ENCODE measurements at regions of chr7 and their contacts with region 1.

Region 1: DNA sequence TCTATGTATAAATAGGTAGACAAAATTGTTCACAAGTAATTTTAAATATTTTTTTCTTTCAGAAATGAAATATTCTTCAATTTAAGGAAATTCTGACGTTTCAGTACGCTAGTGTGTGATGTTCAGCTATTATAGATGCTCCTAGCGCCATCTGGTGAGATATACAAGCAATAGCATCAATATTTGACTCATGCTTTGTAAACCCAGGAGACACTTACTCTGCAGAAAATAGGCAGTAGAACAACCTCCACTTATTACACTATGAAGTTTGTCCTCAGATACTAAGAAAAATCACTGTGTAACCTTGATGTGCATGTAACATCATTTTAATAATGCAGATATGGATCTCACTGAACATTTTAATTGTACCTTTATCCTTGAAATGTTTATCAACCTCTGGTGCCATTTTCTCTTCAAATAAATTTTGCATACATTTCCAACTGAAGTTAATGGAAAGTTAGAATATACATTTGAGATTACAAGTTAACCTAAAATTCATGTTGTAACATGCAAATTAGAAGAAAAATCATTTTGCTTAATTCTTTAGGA is 151.5 kb upstream of the FAM3C start:
- DNase-seq: no peak
- ATAC-seq: peak; percentile 90
- H3K4me3 Mint-ChIP-seq: no peak overlapping the region
- H3K27ac Mint-ChIP-seq: no peak overlapping the region
- H3K4me1 Mint-ChIP-seq: peaks cover 10% of the 10 kb centered on the region
- H3K27me3 Mint-ChIP-seq: no peaks in the 10 kb centered on the region
- CTCF ChIP-seq: peak; percentile 54

Region 2: DNA sequence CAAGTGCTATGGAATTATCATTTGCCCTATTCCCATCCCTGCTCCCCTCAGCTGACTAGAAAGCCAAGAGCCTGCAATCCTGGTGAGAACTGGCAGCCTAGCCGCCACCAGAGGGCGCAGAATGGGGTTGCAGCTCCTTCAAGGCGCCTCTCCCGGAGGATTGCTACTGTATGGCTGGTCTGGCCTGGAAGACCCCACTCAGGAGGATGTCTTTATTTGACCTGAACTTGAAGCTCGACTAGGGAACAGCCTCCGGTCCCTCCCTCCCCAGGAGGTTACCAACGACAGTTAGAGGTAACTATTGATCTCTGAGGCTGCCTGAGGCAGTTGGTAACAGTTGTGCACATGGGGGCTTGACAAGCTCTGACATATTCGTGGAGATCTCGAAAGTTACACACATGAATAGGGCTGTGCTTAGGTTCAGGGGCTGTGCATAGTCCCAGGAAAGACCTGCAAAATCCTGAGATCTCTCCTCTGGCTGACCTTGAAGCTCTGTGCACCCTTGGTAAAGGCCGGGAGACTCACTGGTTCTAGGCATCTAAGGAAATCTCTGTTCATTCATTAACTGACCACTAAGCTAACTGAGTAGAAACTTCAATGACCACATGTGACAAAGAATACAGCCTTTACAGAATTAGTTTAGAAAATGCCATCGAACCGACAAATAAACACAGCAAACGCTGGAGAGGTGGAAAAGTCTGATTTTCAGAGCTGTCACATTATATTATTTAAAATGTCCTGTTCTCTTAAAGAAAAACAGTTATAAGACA is 755.3 kb before region 1 on chr7:
- CTCF ChIA-PET with region 1: no interaction called
- POLR2A ChIA-PET with region 1: no interaction called
- intact Hi-C with region 1: loop called (anchors 5 kb)
- DNase-seq: peak; percentile 50
- ATAC-seq: peak; percentile 73
- H3K4me3 Mint-ChIP-seq: no peak overlapping the region
- H3K27ac Mint-ChIP-seq: no peak overlapping the region
- H3K4me1 Mint-ChIP-seq: no peaks in the 10 kb centered on the region
- H3K27me3 Mint-ChIP-seq: peaks cover 2% of the 10 kb centered on the region
- CTCF ChIP-seq: peak; percentile 74

Region 3: DNA sequence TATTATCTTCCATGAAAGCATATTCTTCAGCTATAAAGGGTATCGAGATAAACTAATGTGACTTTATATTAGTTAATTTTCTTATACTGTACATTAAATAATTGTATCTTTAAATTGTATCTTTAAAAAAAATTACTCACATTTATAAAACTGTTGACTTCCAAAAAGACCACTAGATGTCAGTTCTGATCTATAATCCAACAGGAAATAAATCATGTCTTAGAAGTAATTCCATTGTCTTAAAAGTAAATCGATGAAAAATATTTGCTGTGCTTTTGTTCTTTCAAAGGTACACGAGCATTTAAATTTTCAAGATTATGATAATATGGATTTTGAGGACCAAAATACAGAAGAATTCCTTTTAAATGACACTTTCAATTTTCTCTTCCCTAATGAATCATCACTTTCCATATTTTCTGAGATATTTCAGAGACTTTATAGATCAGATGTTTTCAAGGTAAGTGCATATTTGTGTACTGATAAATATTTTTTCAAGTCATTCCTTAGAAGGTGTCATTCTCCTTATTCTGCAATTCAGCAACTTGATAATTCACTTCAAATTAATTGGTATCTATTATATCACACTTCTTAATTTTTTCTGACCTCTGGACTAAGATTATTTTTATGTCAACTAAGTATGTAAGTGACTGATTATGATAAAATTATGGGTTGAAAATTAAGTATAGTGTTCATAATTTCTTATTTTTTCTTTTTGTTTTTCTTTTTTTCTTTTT is 420.6 kb before region 1 on chr7:
- CTCF ChIA-PET with region 1: interaction called, 6 read pairs
- POLR2A ChIA-PET with region 1: no interaction called
- intact Hi-C with region 1: loop called (anchors 1 kb)
- DNase-seq: no peak
- ATAC-seq: no peak
- H3K4me3 Mint-ChIP-seq: no peak overlapping the region
- H3K27ac Mint-ChIP-seq: no peak overlapping the region
- H3K4me1 Mint-ChIP-seq: peaks cover 18% of the 10 kb centered on the region
- H3K27me3 Mint-ChIP-seq: no peaks in the 10 kb centered on the region
- CTCF ChIP-seq: no peak

Region 4: GRCh38 chr7:121360564-121360963 is 187.1 kb before region 1 on chr7:
- CTCF ChIA-PET with region 1: interaction called, 27 read pairs
- POLR2A ChIA-PET with region 1: no interaction called
- intact Hi-C with region 1: no loop called
- DNase-seq: no peak
- ATAC-seq: no peak
- H3K4me3 Mint-ChIP-seq: no peak overlapping the region
- H3K27ac Mint-ChIP-seq: no peak overlapping the region
- H3K4me1 Mint-ChIP-seq: no peaks in the 10 kb centered on the region
- H3K27me3 Mint-ChIP-seq: no peaks in the 10 kb centered on the region
- CTCF ChIP-seq: no peak

Region 5: DNA sequence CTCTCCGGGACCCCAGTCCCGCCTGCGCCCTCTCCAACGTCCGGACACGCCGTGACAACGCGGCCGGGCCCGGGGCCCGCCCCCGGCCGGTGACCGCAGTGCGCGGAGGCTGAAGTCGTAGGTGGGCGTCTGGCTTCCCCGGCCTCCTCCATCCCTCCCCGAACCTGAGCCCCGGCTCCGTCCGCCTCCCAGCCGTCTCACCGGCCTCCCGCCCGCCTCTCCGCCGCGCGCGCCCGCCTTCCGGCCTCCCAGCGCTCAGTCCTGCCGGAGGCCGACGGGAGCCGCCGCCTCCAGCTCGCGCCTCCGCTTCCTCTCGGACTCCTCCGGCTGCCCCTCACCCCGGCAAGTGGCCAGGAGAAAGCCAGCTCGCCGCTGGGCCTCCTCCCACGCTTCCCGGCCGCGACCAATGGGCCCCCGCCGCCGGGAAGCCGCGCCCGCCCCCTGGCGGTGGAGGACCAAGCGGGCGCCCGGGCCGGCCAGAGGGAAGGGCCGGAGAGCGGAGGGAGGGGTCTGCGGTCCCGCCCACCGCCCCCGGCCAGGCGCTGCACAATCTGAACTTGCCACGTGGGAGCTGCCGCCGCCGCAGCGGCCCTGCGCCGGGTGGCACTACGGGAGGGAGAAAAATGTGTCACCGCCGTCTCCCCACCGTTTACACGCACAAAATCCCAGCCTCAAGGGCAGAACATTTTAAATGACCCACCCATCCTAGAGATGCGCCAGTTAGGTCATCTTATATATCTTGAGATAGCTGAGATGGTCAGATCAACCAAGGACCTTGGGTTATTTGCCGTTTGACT is 151.5 kb before region 1 on chr7 and contains the start of gene FAM3C:
- CTCF ChIA-PET with region 1: interaction called, 9 read pairs
- POLR2A ChIA-PET with region 1: interaction called, 3 read pairs
- intact Hi-C with region 1: loop called (anchors 1 kb)
- DNase-seq: peak; percentile 96
- ATAC-seq: peak; percentile 88
- H3K4me3 Mint-ChIP-seq: peak within 1 kb of the TSS; percentile 91
- H3K27ac Mint-ChIP-seq: peak within 1 kb of the TSS; percentile 90
- H3K4me1 Mint-ChIP-seq: peaks cover 42% of the 10 kb centered on the region
- H3K27me3 Mint-ChIP-seq: no peaks in the 10 kb centered on the region
- CTCF ChIP-seq: no peak
- total RNA-seq, gene FAM3C: 54.8 and 59.3 TPM in 2 replicates

Region 6: DNA sequence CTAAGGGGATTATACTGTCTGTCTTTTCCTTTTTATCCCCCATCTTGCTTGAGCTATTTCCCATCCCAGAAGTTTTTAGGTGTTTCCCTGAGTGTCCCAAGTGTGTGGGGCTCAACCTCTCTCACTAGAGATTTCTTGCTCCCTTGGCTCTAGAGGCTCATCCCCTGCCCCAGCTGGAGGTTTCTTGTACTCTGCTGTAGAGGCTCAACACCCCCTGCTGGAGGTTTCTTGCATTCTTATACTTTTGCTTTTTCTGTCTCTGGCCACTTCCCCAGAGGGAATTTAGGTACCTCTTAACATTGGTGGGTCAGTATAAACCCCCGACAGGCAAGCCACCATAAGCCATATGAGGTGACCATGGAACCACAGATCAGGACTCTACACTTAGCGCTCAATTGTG is 37.3 kb before region 1 on chr7:
- CTCF ChIA-PET with region 1: no interaction called
- POLR2A ChIA-PET with region 1: no interaction called
- intact Hi-C with region 1: loop called (anchors 1 kb)
- DNase-seq: no peak
- ATAC-seq: no peak
- H3K4me3 Mint-ChIP-seq: no peak overlapping the region
- H3K27ac Mint-ChIP-seq: no peak overlapping the region
- H3K4me1 Mint-ChIP-seq: no peaks in the 10 kb centered on the region
- H3K27me3 Mint-ChIP-seq: no peaks in the 10 kb centered on the region
- CTCF ChIP-seq: no peak

Region 7: GRCh38 chr7:121530227-121531174 is 17.1 kb before region 1 on chr7:
- CTCF ChIA-PET with region 1: no interaction called
- POLR2A ChIA-PET with region 1: no interaction called
- intact Hi-C with region 1: no loop called
- DNase-seq: no peak
- ATAC-seq: peak; percentile 98
- H3K4me3 Mint-ChIP-seq: no peak overlapping the region
- H3K27ac Mint-ChIP-seq: peak overlapping the region; percentile 7
- H3K4me1 Mint-ChIP-seq: peaks cover 15% of the 10 kb centered on the region
- H3K27me3 Mint-ChIP-seq: peaks cover 7% of the 10 kb centered on the region
- CTCF ChIP-seq: no peak